Activated CD4-positive, alpha-beta memory T cell treated with anti-CD3 and anti-CD28 coated beads for 36 hours (primary cell): ENCODE measurements at regions of chr2 and their contacts with region 1.

Region 1: GRCh38 chr2:97697252-97698235 is 15.8 kb upstream of the ZAP70 start:
- DNase-seq: peak; percentile 95
- H3K4me3 Mint-ChIP-seq: peak overlapping the region; percentile 17
- H3K27ac Mint-ChIP-seq: no peak overlapping the region
- H3K4me1 Mint-ChIP-seq: peaks cover 6% of the 10 kb centered on the region
- H3K27me3 Mint-ChIP-seq: peaks cover 1% of the 10 kb centered on the region

Region 2: GRCh38 chr2:97645695-97646629 is 51.6 kb before region 1 on chr2 and contains the start of gene COX5B:
- CTCF ChIA-PET with region 1: interaction called, 22 read pairs
- POLR2A ChIA-PET with region 1: interaction called, 8 read pairs
- intact Hi-C with region 1: loop called (anchors 1 kb)
- DNase-seq: peak; percentile 100
- H3K4me3 Mint-ChIP-seq: peak within 1 kb of the TSS; percentile 81
- H3K27ac Mint-ChIP-seq: peak within 1 kb of the TSS; percentile 88
- H3K4me1 Mint-ChIP-seq: peaks cover 21% of the 10 kb centered on the region
- H3K27me3 Mint-ChIP-seq: no peaks in the 10 kb centered on the region
- total RNA-seq, gene COX5B: 215 to 217 TPM

Region 3: DNA sequence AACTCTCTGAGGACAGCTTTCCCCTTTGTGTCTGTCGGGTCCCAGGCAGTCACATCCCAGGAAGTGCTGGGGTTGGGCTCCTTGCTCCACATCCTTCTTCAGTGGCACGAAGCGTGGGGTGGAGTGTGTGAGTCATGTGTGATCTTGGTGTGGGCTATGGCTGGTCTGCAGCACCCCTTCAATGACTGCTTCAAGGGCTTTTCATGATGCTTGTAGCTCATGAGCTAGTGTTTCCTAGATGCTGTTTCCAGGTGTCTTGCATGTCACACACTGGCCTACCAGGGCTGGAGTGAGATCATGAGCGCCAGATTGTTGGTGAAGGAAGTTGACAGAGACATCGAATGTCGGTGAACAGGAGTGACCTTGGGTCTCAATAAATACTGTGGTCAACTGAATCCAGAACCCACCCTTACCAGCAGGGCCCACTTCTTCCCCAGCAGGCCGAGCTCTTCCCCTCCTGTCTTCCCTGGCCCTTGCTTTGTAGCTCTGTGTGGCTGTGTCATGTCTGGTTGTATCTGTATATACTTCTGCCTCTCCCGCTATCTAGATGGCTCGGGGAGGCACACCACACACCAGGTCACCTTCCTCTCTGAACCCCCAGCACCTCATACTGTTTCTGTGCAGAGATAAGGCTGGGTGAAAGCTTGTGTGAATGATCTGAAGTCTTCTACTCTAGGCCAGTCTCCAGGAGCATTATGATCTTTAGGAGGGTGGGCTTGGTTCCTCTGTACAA is 24.2 kb before region 1 on chr2:
- CTCF ChIA-PET with region 1: interaction called, 19 read pairs
- POLR2A ChIA-PET with region 1: no interaction called
- intact Hi-C with region 1: no loop called
- DNase-seq: peak; percentile 64
- H3K4me3 Mint-ChIP-seq: no peak overlapping the region
- H3K27ac Mint-ChIP-seq: peak overlapping the region; percentile 68
- H3K4me1 Mint-ChIP-seq: peaks cover 27% of the 10 kb centered on the region
- H3K27me3 Mint-ChIP-seq: no peaks in the 10 kb centered on the region

Region 4: GRCh38 chr2:97718051-97718882 is 20.7 kb after region 1 on chr2:
- CTCF ChIA-PET with region 1: interaction called, 134 read pairs
- POLR2A ChIA-PET with region 1: no interaction called
- intact Hi-C with region 1: loop called (anchors 2 kb)
- DNase-seq: peak; percentile 87
- H3K4me3 Mint-ChIP-seq: peak overlapping the region; percentile 76
- H3K27ac Mint-ChIP-seq: peak overlapping the region; percentile 95
- H3K4me1 Mint-ChIP-seq: peaks cover 71% of the 10 kb centered on the region
- H3K27me3 Mint-ChIP-seq: no peaks in the 10 kb centered on the region

Region 5: GRCh38 chr2:97740590-97741182 is 43.1 kb after region 1 on chr2:
- CTCF ChIA-PET with region 1: interaction called, 53 read pairs
- POLR2A ChIA-PET with region 1: no interaction called
- intact Hi-C with region 1: no loop called
- DNase-seq: peak; percentile 58
- H3K4me3 Mint-ChIP-seq: no peak overlapping the region
- H3K27ac Mint-ChIP-seq: no peak overlapping the region
- H3K4me1 Mint-ChIP-seq: peaks cover 46% of the 10 kb centered on the region
- H3K27me3 Mint-ChIP-seq: no peaks in the 10 kb centered on the region

Region 6: GRCh38 chr2:97747716-97748115 is 50.2 kb after region 1 on chr2:
- CTCF ChIA-PET with region 1: interaction called, 53 read pairs
- POLR2A ChIA-PET with region 1: no interaction called
- intact Hi-C with region 1: loop called (anchors 1 kb)
- DNase-seq: peak; percentile 3
- H3K4me3 Mint-ChIP-seq: no peak overlapping the region
- H3K27ac Mint-ChIP-seq: no peak overlapping the region
- H3K4me1 Mint-ChIP-seq: peaks cover 43% of the 10 kb centered on the region
- H3K27me3 Mint-ChIP-seq: no peaks in the 10 kb centered on the region

Region 7: DNA sequence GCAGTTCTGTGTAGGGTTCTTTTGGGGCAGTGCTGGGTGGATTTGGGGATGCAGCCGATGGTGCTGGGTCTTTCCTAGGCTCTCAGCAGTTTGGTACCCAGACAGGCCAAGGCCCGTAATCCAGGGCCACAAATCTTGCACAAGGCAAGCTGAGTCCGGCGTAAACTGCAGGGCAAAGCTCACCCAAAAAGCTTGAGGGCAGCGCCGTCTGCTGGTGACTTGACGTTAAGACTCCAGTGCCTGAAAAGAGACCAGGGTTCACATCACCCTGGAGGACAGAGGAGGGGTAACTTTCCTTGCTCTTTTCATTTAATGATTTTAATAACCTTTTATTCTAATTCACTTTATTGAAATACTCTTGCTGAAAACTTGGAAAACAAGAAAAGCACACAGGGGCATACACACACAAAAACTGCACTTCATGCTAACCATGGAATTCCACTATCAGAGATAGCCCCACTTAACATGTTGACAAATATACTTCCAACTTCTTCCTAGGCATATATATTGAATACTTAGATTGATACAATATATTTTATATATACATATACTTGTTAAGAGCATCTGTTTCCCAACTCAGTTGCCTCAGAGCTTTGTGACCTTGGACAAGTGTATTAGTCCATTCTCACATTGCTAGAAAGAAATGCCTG is 687.6 kb after region 1 on chr2:
- CTCF ChIA-PET with region 1: interaction called, 33 read pairs
- POLR2A ChIA-PET with region 1: no interaction called
- intact Hi-C with region 1: loop called (anchors 2 kb)
- DNase-seq: peak; percentile 83
- H3K4me3 Mint-ChIP-seq: no peak overlapping the region
- H3K27ac Mint-ChIP-seq: no peak overlapping the region
- H3K4me1 Mint-ChIP-seq: peaks cover 3% of the 10 kb centered on the region
- H3K27me3 Mint-ChIP-seq: peaks cover 7% of the 10 kb centered on the region